ENCODE measurements at regions of chr2 and their contacts with region 1.

Region 1: GRCh38 chr2:88187038-88187676 is 17.0 kb downstream of the THNSL2 start:
- DNase-seq: peak; percentile 89
- ATAC-seq: peak; percentile 78
- H3K4me3 Mint-ChIP-seq: no peak overlapping the region
- H3K27ac Mint-ChIP-seq: no peak overlapping the region
- H3K4me1 Mint-ChIP-seq: peaks cover 19% of the 10 kb centered on the region
- H3K27me3 Mint-ChIP-seq: peaks cover 5% of the 10 kb centered on the region
- CTCF ChIP-seq: peak; percentile 65

Region 2: GRCh38 chr2:88199912-88200682 is 12.9 kb after region 1 on chr2:
- CTCF ChIA-PET with region 1: interaction called, 25 read pairs
- POLR2A ChIA-PET with region 1: interaction called, 3 read pairs
- DNase-seq: peak; percentile 67
- ATAC-seq: peak; percentile 82
- H3K4me3 Mint-ChIP-seq: peak overlapping the region; percentile 61
- H3K27ac Mint-ChIP-seq: no peak overlapping the region
- H3K4me1 Mint-ChIP-seq: peaks cover 28% of the 10 kb centered on the region
- H3K27me3 Mint-ChIP-seq: peaks cover 33% of the 10 kb centered on the region
- CTCF ChIP-seq: no peak

Region 3: GRCh38 chr2:88307817-88308216 is 120.7 kb after region 1 on chr2:
- CTCF ChIA-PET with region 1: interaction called, 36 read pairs
- POLR2A ChIA-PET with region 1: no interaction called
- DNase-seq: peak; percentile 52
- ATAC-seq: peak; percentile 66
- H3K4me3 Mint-ChIP-seq: no peak overlapping the region
- H3K27ac Mint-ChIP-seq: no peak overlapping the region
- H3K4me1 Mint-ChIP-seq: no peaks in the 10 kb centered on the region; the same call in 1 of the 2 replicates
- H3K27me3 Mint-ChIP-seq: no peaks in the 10 kb centered on the region
- CTCF ChIP-seq: peak; percentile 35; the same call in 1 of the 2 replicates

Region 4: GRCh38 chr2:88451811-88452565 is 264.8 kb after region 1 on chr2:
- CTCF ChIA-PET with region 1: interaction called, 12 read pairs
- POLR2A ChIA-PET with region 1: no interaction called
- DNase-seq: peak; percentile 47
- ATAC-seq: peak; percentile 32
- H3K4me3 Mint-ChIP-seq: peak overlapping the region; percentile 82
- H3K27ac Mint-ChIP-seq: no peak overlapping the region
- H3K4me1 Mint-ChIP-seq: peaks cover 23% of the 10 kb centered on the region
- H3K27me3 Mint-ChIP-seq: peaks cover 36% of the 10 kb centered on the region
- CTCF ChIP-seq: no peak